AG04449 (cell line): ENCODE measurements at regions of chr7 and their contacts with region 1.

Region 1: GRCh38 chr7:30740424-30741181 is 11.3 kb upstream of the INMT start:
- DNase-seq: no peak
- H3K4me3 ChIP-seq: no peak overlapping the region
- CTCF ChIP-seq: peak; percentile 97

Region 2: GRCh38 chr7:30308389-30308788 is 432.2 kb before region 1 on chr7:
- CTCF ChIA-PET with region 1: no interaction called
- POLR2A ChIA-PET with region 1: no interaction called
- DNase-seq: no peak
- H3K4me3 ChIP-seq: no peak overlapping the region
- CTCF ChIP-seq: no peak

Region 3: DNA sequence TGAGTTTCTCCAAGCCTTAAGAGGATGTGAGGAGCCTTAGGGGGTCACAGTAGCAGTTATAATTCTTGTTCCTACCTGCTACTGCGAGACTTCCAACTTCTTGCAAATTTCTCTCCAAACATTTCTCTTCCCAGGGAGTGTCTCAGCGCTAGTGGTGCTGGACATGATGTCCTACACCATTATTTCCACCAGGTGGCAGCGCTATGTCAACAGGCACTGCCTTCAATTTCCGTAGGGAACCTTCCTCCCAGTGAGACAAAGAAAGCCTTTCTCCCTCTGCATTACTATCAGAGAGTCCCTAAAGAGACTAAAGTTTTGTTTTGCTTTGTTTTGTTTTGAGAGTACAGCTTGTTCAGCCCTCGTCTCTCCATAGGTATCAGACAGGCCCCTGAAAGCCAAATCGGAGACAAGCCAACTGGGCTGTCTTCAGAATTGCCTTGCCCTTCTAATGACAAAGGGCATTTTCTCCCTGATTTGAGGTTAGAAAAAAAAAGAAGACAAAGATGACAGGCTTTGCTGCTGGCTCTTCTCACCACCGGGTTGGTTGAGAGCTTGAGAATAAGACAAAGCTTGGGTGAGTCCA is 191.8 kb before region 1 on chr7:
- CTCF ChIA-PET with region 1: interaction called, 16 read pairs
- POLR2A ChIA-PET with region 1: no interaction called
- DNase-seq: no peak
- H3K4me3 ChIP-seq: no peak overlapping the region
- CTCF ChIP-seq: peak; percentile 74

Region 4: DNA sequence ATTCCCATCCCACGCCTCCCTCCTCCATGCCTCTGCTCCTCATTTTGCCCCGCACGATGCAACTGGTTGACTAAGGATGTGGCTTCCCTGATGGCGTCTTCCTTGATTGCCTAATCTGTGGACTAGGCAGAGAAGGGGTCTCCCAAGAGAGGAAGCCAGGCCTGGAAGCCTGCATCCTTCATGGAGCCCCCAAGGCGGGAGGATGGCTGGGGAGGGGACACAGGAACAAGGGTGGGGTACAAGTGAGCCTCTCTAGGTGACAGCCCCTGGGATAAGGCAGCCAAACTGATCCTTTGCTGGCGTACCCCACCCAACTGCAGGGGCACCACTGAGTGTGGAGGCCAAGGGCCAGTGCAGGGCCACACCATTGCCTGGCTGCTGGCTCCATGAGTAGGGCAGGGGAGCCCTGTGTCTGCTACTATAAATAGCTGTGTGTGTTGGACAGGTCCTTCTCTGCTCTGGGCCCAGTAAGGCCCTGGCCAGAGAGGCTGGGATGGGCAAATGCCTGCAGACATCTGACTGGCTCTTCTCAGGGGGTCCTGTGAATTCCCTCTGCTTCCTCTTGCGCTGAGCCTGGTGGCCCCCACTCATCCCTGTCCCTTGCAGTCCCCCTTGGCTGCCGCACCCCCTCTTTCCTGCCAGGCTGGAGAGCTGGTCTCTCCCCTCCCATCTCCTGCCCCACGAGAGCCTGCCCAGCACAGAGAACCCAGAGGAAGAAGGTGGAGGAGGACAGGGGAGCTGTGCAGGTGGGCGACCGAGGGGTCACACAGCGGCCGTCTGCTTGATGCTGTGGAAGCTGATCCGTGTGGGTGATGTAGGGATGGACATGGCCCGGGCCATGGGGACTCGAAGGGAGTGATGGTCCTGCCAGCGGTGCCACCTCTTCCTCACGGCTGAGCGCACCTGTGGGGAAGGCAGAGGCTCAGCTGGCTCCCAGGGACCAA is 87.6 kb before region 1 on chr7:
- CTCF ChIA-PET with region 1: interaction called, 12 read pairs
- POLR2A ChIA-PET with region 1: no interaction called
- DNase-seq: no peak
- H3K4me3 ChIP-seq: no peak overlapping the region
- CTCF ChIP-seq: no peak

Region 5: DNA sequence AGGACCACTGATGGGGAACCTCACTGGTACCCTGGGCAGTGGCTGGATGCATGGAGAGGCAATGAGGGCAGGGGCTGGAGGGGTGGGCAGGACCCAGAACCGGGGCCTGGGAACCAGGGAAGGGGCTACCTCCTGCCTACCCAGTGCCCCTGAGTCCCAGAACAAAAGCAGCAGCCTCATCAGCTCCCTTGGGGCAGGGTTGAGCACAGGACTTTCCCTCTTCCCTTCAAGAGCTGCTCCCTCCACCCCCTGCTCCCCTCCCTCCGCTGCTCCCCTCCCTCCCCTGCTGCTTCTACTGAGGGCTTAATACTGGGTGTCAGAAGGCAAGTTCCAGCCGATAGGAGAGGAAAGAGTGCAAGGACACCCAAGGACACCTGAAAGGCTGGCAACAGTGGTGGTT is 16.9 kb before region 1 on chr7:
- CTCF ChIA-PET with region 1: interaction called, 43 read pairs
- POLR2A ChIA-PET with region 1: no interaction called
- DNase-seq: no peak
- H3K4me3 ChIP-seq: no peak overlapping the region
- CTCF ChIP-seq: no peak

Region 6: DNA sequence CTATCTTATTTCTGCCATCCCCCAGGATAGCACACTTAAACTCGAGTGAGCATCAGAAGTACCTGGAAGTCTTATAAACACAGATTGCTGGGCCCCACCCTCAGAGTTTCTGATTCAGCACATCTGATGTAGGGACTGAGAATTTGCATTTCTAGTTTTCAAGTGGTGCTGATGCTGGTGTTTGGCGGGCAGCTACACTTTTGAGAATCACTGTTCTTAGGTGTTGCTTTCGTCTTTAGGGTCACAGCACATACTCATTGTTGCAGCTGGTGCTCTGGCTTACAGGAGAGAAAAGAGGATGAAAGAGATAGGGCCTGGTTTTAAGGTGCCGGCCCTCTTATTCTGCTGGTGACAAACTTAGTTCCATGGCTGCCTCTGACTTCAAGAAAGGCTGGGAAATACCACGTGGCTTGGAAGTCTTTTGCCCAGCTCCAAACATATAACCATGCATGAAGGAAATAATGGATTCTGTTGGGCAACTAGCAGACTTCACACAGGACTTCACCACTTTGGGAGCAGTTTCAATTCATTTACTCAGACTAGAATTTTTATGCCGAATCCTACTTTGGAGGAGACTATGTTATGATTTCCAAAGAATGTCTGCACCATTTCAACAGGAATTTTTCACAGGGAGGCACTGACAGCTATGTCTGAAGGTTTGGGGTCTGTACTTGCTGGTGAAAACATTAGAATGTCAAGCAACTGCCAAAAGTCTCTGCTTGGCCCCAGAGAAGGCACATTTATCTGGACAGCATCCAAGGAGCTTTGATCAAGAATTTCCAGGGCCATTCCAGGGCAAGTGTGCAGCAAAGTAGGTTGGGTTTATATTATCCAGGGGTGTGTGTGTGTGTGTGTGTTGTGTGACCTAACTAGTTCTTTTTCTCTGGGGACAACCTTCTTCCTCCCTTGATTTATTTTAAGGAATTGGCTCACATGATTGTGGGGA is 23.7 kb after region 1 on chr7:
- CTCF ChIA-PET with region 1: interaction called, 17 read pairs
- POLR2A ChIA-PET with region 1: no interaction called
- DNase-seq: peak; percentile 59
- H3K4me3 ChIP-seq: no peak overlapping the region
- CTCF ChIP-seq: no peak

Region 7: DNA sequence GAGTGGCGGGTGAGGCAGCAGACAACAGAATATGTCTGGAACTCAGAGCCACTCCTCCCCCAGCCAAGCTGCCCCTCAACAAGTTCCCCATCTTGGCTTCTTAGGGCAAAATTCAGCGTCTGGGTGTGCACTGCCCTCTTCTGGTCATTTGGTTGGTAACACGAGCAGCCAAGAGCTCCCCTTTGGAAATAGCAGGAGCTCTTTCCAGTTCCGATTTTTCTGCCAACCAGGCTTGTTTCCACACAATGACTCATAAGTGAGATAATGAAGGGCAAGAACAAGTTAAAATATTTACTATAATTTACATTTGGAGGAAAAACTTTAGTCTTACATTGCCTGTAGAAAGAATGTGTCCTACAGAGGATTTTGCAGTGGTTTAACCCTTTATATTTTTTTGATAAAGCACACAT is 382.1 kb after region 1 on chr7:
- CTCF ChIA-PET with region 1: interaction called, 24 read pairs
- POLR2A ChIA-PET with region 1: no interaction called
- DNase-seq: peak; percentile 60
- H3K4me3 ChIP-seq: no peak overlapping the region
- CTCF ChIP-seq: peak; percentile 77